Pancreas (tissue), 10 donors: ENCODE measurements at regions of chr7 and their contacts with region 1.

Region 1: GRCh38 chr7:131945313-131945911 is 389.0 kb upstream of the PODXL start:
- DNase-seq: peak in 5 of 6 donors; percentile 18 to 86 (median 51)
- ATAC-seq: peak; percentile 66 to 93 (median 89)
- H3K4me3 ChIP-seq: peak overlapping the region in 1 of 4 donors; percentile 23
- H3K27ac ChIP-seq: no peak overlapping the region
- H3K4me1 ChIP-seq: no peaks in the 10 kb centered on the region
- H3K27me3 ChIP-seq: peaks cover 0 to 5% (median 0%) of the 10 kb centered on the region in 4 donors
- CTCF ChIP-seq: peak; percentile 70 to 90 (median 83)

Region 2: DNA sequence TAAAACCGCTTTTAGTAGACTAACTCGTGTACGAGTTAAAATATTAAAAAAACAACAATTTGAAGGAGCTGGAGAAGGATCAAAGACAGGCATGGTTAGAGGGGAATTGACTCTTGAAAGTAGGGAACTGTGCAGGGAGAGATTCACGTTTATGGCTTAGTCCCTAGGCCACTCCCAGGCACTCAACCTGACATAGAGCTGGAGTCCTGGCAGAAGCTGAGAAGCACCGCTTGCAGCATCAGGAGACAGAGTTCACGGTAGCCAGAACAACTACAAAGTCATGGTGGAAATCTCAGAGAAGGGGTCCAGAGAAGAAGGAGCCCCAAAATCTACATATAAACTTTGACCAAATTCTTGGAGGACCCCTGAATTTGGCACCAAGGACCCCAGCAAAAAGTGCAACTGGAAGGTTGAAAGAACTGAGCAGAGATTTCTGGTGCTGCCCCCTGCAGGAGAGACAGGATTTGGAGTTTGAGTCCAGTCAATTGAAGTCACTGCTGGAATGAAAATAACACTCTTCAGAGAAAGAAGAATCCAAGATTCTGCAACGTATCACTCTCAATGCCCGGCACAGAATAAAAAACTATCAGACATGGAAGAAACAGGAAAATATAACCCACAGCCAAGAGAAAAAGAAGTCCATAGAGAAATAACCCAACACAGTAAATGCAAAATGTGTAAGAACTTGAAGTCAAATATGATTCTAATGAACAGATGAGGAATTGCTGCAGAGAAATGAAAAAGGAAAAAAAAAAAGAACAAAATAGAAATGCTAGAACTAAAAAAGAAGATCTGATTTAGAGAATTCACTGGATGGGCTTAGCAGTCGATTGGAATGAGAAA is 104.3 kb after region 1 on chr7:
- intact Hi-C with region 1: loop called in 1 of 3 experiments (anchors 5 kb)
- DNase-seq: peak in 3 of 6 donors; percentile 12 to 70 (median 51)
- ATAC-seq: peak in 1 of 4 donors; percentile 63
- H3K4me3 ChIP-seq: no peak overlapping the region
- H3K27ac ChIP-seq: no peak overlapping the region
- H3K4me1 ChIP-seq: no peaks in the 10 kb centered on the region
- H3K27me3 ChIP-seq: peaks cover 0 to 3% (median 0%) of the 10 kb centered on the region in 4 donors
- CTCF ChIP-seq: peak; percentile 29 to 56 (median 47)

Region 3: GRCh38 chr7:132250883-132251653 is 305.7 kb after region 1 on chr7:
- intact Hi-C with region 1: loop called in 1 of 3 experiments (anchors 10 kb)
- DNase-seq: peak; percentile 87 to 98 (median 94)
- ATAC-seq: peak; percentile 96 to 97 (median 97)
- H3K4me3 ChIP-seq: no peak overlapping the region
- H3K27ac ChIP-seq: peak overlapping the region; percentile 23 to 78 (median 64)
- H3K4me1 ChIP-seq: peaks cover 6 to 25% (median 15%) of the 10 kb centered on the region in 3 donors
- H3K27me3 ChIP-seq: no peaks in the 10 kb centered on the region
- CTCF ChIP-seq: no peak

Region 4: DNA sequence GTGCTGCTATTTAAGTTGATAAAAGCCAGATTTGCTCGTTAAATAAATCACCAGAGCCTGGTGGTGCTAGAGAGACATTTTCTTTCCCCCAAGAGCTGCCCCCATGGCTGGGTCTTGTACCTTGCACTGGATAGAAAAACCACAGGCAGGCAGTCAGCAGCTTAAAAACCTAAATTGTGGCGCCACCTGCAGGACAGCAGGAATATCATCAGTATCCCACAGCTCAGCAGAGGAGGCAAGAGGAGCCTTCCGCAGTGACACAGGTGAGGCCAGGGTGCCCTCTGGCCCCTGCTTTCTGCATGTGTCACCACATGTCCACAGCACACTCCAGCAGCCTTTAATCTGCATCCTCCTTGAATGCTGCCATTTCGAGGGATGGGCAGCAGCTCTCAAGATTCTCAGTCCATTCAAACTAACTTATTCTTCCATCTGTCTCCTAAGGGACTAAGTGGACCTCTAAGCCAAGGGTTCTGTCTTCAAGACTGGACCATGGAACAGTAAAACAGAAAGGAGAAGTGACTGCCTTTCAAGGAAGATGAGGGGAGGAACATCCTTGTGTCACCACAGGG is 635.4 kb after region 1 on chr7:
- intact Hi-C with region 1: loop called in 2 of 3 experiments (anchors 10 kb)
- DNase-seq: peak; percentile 46 to 73 (median 62)
- ATAC-seq: peak; percentile 51 to 85 (median 80)
- H3K4me3 ChIP-seq: no peak overlapping the region
- H3K27ac ChIP-seq: no peak overlapping the region
- H3K4me1 ChIP-seq: peaks cover 0 to 3% (median 0%) of the 10 kb centered on the region in 3 donors
- H3K27me3 ChIP-seq: peaks cover 0 to 2% (median 0%) of the 10 kb centered on the region in 4 donors
- CTCF ChIP-seq: peak; percentile 31 to 75 (median 68)